Dendritic cell treated with granulocyte-macrophage colony-stimulating factor and Interleukin-4, amounts not matched to agents 40 ng/mL and 50 ng/mL, for 4 days (primary cell): ENCODE measurements at regions of chr7 and their contacts with region 1.

Region 1: DNA sequence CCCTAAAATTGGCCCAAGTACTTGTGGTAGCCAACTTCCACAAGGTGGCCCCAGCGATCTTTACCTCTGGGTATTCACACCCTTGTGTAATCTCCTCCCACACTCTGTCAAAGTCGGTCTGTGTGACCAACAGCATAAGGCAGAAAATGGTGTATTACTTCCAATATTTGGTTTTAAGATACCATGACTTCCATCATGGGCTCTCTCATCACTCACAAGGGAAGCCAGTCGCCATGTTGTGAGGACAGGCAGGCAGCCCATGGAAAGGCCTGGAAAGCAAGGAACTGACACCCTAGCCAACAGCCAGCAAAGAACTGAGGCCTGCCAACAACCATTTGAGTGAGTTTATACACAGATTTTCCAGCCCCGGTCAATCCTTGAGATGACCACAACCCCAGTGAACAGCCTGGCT is 91.0 kb upstream of the KMT2E start:
- H3K4me3 Mint-ChIP-seq: no peak overlapping the region
- H3K27ac Mint-ChIP-seq: peak overlapping the region; percentile 45
- H3K4me1 Mint-ChIP-seq: peaks cover 4% of the 10 kb centered on the region
- H3K27me3 Mint-ChIP-seq: no peaks in the 10 kb centered on the region

Region 2: GRCh38 chr7:103573479-103574058 is 1349.4 kb before region 1 on chr7:
- intact Hi-C with region 1: loop called (anchors 5 kb)
- H3K4me3 Mint-ChIP-seq: no peak overlapping the region
- H3K27ac Mint-ChIP-seq: no peak overlapping the region
- H3K4me1 Mint-ChIP-seq: no peaks in the 10 kb centered on the region
- H3K27me3 Mint-ChIP-seq: peaks cover 2% of the 10 kb centered on the region

Region 3: GRCh38 chr7:104231054-104232046 is 691.7 kb before region 1 on chr7:
- intact Hi-C with region 1: loop called (anchors 5 kb)
- H3K4me3 Mint-ChIP-seq: no peak overlapping the region
- H3K27ac Mint-ChIP-seq: no peak overlapping the region
- H3K4me1 Mint-ChIP-seq: no peaks in the 10 kb centered on the region
- H3K27me3 Mint-ChIP-seq: peaks cover 15% of the 10 kb centered on the region

Region 4: GRCh38 chr7:104883718-104884452 is 39.1 kb before region 1 on chr7:
- intact Hi-C with region 1: loop called (anchors 1 kb)
- H3K4me3 Mint-ChIP-seq: peak overlapping the region; percentile 65
- H3K27ac Mint-ChIP-seq: peak overlapping the region; percentile 96
- H3K4me1 Mint-ChIP-seq: peaks cover 16% of the 10 kb centered on the region
- H3K27me3 Mint-ChIP-seq: no peaks in the 10 kb centered on the region

Region 5: GRCh38 chr7:105036217-105037168 is 113.5 kb after region 1 on chr7:
- intact Hi-C with region 1: loop called (anchors 5 kb)
- H3K4me3 Mint-ChIP-seq: no peak overlapping the region
- H3K27ac Mint-ChIP-seq: no peak overlapping the region
- H3K4me1 Mint-ChIP-seq: peaks cover 42% of the 10 kb centered on the region
- H3K27me3 Mint-ChIP-seq: no peaks in the 10 kb centered on the region

Region 6: DNA sequence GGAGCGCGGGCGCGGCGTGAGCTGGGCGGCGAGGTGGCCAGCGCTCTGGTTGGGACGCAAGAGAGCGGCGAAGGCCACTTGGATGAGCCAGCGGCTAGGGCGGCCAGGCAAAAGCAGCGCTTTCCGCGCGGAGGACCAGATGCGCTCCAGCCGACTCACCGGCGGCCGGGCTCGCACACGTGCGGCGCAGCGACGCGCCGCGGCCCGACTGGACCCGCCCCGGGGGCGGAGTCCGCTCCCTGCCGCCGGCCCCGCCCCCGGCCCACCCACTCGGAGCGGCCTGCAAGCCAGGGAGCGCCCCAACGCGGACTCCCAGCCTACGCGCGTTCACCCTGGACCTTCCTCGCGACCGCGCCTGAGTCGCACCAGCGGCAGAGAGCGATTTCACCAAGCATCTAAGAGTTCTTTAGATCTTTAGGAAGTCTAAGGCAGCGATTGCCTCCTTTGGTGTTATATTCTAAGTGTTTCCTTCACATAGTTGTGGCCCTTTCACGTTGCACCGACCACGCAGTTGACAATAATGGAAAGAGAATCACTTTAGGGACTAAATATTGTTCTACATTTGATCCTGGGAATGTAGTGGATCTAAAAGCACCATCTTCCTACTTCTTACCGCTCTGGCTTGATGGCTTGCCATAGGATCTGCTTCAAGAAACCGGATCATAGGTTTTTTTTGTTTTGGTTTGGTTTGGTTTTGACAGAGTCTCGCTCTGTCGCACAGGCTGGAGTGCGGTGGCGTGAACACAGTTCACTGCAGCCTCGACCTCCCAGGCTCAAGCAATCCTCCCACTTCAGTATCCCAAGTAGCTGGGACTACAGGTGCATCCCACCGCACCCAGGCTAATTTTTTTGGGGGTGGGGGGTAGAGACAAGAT is 599.3 kb after region 1 on chr7 and contains the start of gene PUS7:
- intact Hi-C with region 1: no loop called
- H3K4me3 Mint-ChIP-seq: peak within 1 kb of the TSS; percentile 91
- H3K27ac Mint-ChIP-seq: peak within 1 kb of the TSS; percentile 96
- H3K4me1 Mint-ChIP-seq: peaks cover 23% of the 10 kb centered on the region
- H3K27me3 Mint-ChIP-seq: peaks cover 2% of the 10 kb centered on the region